Mammary epithelial cell (primary cell): ENCODE measurements at regions of chr3 and their contacts with region 1.

Region 1: DNA sequence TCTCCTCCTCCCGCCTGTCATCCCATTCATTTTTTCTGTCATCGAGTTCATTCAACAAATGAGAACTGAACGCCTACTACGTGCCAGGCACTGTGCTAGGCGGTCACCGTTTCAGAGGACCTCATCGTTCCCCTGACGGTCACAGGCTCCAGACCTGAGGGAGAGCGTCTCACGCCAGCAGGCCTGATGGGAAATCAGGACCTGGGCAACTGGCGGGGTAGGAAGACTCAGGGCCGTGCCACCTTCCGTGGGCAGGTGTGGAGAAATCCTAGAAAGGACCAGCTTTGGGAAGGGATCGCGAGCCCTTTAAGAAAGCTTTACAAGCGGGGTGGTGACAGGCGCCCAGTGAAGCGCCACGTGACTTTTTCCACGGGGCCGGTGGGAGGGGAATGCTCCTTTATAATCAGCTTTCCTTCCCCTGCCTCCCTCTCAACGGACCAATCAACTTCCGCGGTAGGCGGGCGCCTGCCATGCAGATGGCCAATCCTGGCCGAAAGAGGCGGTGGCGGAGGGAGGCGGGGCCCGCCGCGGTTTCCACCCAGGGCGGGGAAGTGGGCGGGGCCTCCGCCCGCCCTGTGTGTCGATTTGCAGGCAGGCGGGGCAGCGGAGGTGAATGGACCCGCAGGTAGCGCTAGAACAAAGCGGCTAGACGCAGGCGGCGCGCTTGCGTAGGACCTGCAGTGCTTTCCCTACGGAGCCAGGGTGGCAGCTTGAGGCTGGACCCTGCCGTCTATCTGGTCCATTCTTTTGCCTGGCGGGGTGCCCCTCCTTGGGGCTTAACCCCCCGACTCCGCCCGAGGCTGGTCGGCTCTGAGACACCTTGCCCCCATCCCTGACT is 816 bp upstream of the DUSP7 start:
- DNase-seq: peak; percentile 100
- H3K4me3 ChIP-seq: peak overlapping the region; percentile 45 to 64 (median 54)
- H3K27ac ChIP-seq: peak overlapping the region; percentile 88
- H3K4me1 ChIP-seq: peaks cover 66% of the 10 kb centered on the region
- H3K27me3 ChIP-seq: no peaks in the 10 kb centered on the region
- CTCF ChIP-seq: peak in 1 of 2 donors; percentile 24

Region 2: GRCh38 chr3:51974963-51975851 is 82.0 kb before region 1 on chr3 and contains the start of gene ABHD14A:
- CTCF ChIA-PET with region 1: no interaction called
- dilution Hi-C with region 1: no loop called
- in situ Hi-C with region 1: no loop called
- intact Hi-C with region 1: loop called (anchors 2 kb)
- DNase-seq: peak; percentile 67
- H3K4me3 ChIP-seq: peak within 1 kb of the TSS; percentile 43 to 79 (median 68)
- H3K27ac ChIP-seq: peak within 1 kb of the TSS; percentile 18
- H3K4me1 ChIP-seq: peaks cover 48% of the 10 kb centered on the region
- H3K27me3 ChIP-seq: no peaks in the 10 kb centered on the region
- CTCF ChIP-seq: no peak
- total RNA-seq, gene ABHD14A: 9.7 to 10.0 TPM

Region 3: DNA sequence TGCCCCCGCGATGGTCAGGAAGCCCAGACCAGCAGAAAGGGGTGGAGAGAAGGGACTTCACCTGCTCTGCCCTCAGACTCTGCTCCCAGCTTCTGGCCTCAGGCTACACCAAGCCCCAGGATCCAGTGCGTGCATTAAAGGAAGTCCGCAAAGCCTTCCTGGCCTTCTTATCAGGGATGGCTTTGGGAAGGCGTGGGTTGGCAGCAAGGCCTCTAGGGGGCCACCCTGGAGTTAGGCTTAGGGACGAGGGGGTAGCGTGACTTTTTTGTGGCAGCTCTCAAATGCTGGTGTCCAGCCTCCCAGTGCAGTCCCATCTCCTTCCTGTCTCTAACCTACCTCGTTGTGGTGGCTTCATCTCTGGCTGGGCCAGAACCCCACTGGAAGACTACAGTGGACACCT is 42.6 kb before region 1 on chr3:
- CTCF ChIA-PET with region 1: interaction called, 24 read pairs
- dilution Hi-C with region 1: no loop called
- in situ Hi-C with region 1: loop called in 1 of 2 experiments (anchors 10 kb)
- intact Hi-C with region 1: no loop called
- DNase-seq: no peak
- H3K4me3 ChIP-seq: no peak overlapping the region
- H3K27ac ChIP-seq: no peak overlapping the region
- H3K4me1 ChIP-seq: no peaks in the 10 kb centered on the region
- H3K27me3 ChIP-seq: no peaks in the 10 kb centered on the region
- CTCF ChIP-seq: peak in 1 of 2 donors; percentile 14

Region 4: GRCh38 chr3:52109611-52110301 is 52.6 kb after region 1 on chr3:
- CTCF ChIA-PET with region 1: interaction called, 6 read pairs
- dilution Hi-C with region 1: loop called (anchors 10 kb)
- in situ Hi-C with region 1: no loop called
- intact Hi-C with region 1: no loop called
- DNase-seq: no peak
- H3K4me3 ChIP-seq: no peak overlapping the region
- H3K27ac ChIP-seq: no peak overlapping the region
- H3K4me1 ChIP-seq: peaks cover 25% of the 10 kb centered on the region
- H3K27me3 ChIP-seq: no peaks in the 10 kb centered on the region
- CTCF ChIP-seq: no peak

Region 5: DNA sequence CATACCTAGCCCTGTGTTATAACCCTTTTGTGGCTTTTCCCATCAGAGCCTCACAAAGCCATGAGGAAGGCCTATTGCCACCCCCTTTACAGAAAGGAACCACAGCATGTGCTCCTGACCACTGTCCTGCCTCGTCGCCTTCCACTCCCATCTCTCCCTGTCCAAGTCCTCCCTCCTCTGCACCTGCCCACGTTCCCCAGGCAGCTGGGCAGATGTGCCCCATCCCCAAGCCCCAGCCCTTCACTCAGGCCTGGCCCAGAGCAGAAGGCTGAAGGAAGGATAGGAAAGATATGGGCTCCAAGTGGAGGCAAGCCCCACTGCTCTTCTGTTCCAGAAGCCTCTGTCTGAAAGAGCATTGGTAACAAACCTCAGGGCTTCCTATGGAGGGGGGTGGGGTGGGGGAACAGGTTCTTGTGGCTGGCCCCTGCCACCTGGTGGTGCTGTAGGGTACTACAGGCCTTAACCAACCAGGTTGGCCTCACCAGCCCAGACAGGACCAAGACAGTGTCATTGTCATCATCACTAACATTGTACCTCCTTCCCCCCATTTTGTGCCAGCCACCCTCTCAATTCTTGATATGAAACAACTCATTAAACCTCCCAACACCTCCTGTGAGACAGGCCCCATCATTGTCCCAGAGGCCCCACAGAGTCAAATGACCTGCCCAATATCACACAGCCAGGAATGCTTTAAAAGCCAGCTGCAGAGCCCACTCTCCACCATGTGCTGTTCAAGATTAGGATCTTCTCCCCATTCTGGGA is 87.0 kb after region 1 on chr3:
- CTCF ChIA-PET with region 1: no interaction called
- dilution Hi-C with region 1: no loop called
- in situ Hi-C with region 1: no loop called
- intact Hi-C with region 1: loop called (anchors 1 kb)
- DNase-seq: peak; percentile 53
- H3K4me3 ChIP-seq: no peak overlapping the region
- H3K27ac ChIP-seq: no peak overlapping the region
- H3K4me1 ChIP-seq: peaks cover 9% of the 10 kb centered on the region
- H3K27me3 ChIP-seq: no peaks in the 10 kb centered on the region
- CTCF ChIP-seq: peak; percentile 82 to 94

Region 6: GRCh38 chr3:52685709-52686691 is 628.8 kb after region 1 on chr3 and contains the starts of genes GNL3 and PBRM1:
- CTCF ChIA-PET with region 1: no interaction called
- dilution Hi-C with region 1: no loop called
- in situ Hi-C with region 1: no loop called
- intact Hi-C with region 1: no loop called
- DNase-seq: peak; percentile 95
- H3K4me3 ChIP-seq: peak within 1 kb of the TSS; percentile 81 to 97 (median 89)
- H3K27ac ChIP-seq: peak within 1 kb of the TSS; percentile 76
- H3K4me1 ChIP-seq: peaks cover 20% of the 10 kb centered on the region
- H3K27me3 ChIP-seq: no peaks in the 10 kb centered on the region
- CTCF ChIP-seq: no peak
- total RNA-seq, gene GNL3: 81.5 to 97.8 TPM
- total RNA-seq, gene PBRM1: 53.0 to 85.2 TPM